ENCODE measurements at regions of chr11 and their contacts with region 1.

Region 1: DNA sequence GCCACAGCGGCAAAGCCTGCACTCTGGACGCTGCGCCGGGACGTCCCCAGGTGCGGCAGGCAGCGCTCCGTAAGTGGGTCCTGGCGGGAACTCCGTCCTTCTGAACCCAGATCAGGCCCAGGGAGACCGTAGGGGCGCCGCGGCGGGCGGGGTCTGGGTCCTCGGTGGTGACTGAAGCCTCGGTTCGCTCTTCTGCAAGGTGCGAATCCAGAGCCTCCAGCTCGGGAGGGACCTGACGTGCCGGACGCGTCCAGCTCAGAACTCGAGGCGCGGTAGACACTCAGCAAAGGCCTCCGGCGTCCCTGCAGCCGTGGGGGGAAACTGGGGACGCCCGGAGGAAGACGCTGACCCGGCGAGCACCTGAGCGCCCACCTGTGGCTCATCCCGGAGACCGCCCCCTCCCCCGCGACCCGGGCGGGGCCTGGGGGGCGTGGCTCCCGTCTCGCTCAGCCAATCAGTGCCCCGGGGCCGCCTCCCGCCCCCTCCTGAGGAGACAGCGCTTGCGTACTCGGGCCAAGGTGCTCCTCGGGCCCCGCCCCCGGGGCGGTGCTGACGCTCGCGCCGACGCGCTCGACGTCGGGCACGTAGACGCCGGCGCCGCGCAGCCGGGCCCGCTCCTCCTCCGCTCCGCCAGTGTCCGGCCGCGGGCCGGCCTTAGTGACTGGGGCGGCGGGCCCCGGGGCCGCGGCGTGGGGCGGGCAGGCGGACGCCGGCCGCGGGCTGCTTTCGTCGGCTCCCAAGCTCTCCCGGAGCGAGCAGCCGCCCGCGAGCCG is at the start of gene PPFIA1:
- DNase-seq: peak; percentile 98
- ATAC-seq: peak; percentile 94
- H3K4me3 Mint-ChIP-seq: peak within 1 kb of the TSS; percentile 86
- H3K27ac Mint-ChIP-seq: no peak within 1 kb of the TSS
- H3K4me1 Mint-ChIP-seq: peaks cover 33% of the 10 kb centered on the region
- H3K27me3 Mint-ChIP-seq: peaks cover 9% of the 10 kb centered on the region
- CTCF ChIP-seq: no peak
- total RNA-seq, gene PPFIA1: 52.3 and 53.3 TPM in 2 replicates

Region 2: GRCh38 chr11:69675811-69676371 is 594.4 kb before region 1 on chr11:
- CTCF ChIA-PET with region 1: no interaction called
- POLR2A ChIA-PET with region 1: no interaction called
- intact Hi-C with region 1: loop called (anchors 5 kb)
- DNase-seq: no peak
- ATAC-seq: no peak
- H3K4me3 Mint-ChIP-seq: peak overlapping the region; percentile 95
- H3K27ac Mint-ChIP-seq: no peak overlapping the region
- H3K4me1 Mint-ChIP-seq: peaks cover 25% of the 10 kb centered on the region
- H3K27me3 Mint-ChIP-seq: peaks cover 3% of the 10 kb centered on the region
- CTCF ChIP-seq: no peak

Region 3: GRCh38 chr11:70202898-70203748 is 67.2 kb before region 1 on chr11 and contains the start of gene FADD:
- CTCF ChIA-PET with region 1: no interaction called
- POLR2A ChIA-PET with region 1: interaction called, 5 read pairs
- intact Hi-C with region 1: loop called (anchors 1 kb)
- DNase-seq: peak; percentile 83
- ATAC-seq: peak; percentile 66
- H3K4me3 Mint-ChIP-seq: peak within 1 kb of the TSS; percentile 93
- H3K27ac Mint-ChIP-seq: peak within 1 kb of the TSS; percentile 92
- H3K4me1 Mint-ChIP-seq: peaks cover 28% of the 10 kb centered on the region
- H3K27me3 Mint-ChIP-seq: no peaks in the 10 kb centered on the region
- CTCF ChIP-seq: no peak
- total RNA-seq, gene FADD: 29.5 and 31.2 TPM in 2 replicates

Region 4: GRCh38 chr11:70587075-70587389 is 316.7 kb after region 1 on chr11:
- CTCF ChIA-PET with region 1: no interaction called
- POLR2A ChIA-PET with region 1: no interaction called
- intact Hi-C with region 1: no loop called
- DNase-seq: no peak
- ATAC-seq: no peak
- H3K4me3 Mint-ChIP-seq: no peak overlapping the region
- H3K27ac Mint-ChIP-seq: no peak overlapping the region
- H3K4me1 Mint-ChIP-seq: no peaks in the 10 kb centered on the region
- H3K27me3 Mint-ChIP-seq: peaks cover 2% of the 10 kb centered on the region
- CTCF ChIP-seq: no peak